ENCODE measurements at regions of chr1 and their contacts with region 1.

Region 1: DNA sequence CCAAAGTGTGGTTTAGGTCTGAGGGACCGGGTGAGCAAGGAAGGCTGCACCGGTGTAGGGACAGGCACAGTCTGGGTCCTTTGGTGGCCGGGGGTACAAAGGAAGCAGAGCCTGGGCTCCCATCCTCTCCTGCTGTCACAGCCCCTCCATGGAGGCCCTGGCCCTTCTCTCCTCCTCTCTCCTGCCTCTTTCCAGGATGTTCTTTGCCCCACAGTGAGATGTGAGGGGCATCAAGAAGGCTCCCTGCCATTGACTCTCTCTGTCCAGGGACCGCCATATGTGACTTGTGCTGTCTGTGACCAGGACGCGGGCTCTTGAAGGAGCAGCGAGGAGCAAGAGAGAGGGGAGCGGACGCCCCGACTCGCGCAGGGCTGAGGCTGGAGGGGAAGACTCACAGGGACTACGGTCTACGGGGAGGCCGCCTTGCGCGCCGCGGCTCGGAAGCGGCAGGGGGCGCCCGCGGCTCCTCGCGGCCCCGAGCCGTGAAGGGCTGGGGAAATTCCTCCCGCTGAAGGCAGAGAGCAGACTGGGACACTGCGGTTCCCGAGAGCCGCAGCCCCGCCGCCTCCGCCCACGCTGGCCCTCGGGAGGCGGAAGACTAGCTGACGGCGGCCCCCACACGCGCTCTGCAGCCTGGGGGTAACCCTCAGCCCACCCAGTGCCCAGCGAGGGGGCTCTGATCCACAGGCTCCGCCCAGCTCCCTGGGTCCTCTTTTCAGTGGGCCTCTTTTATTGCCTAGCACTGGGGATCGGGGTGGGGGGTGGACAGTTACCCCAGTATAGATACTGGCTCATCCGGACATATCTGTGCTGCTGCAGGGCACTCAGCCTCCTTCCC is 40.8 kb downstream of the MAB21L3 start:
- DNase-seq: peak; percentile 77
- H3K4me3 Mint-ChIP-seq: peak overlapping the region; percentile 65
- H3K27ac Mint-ChIP-seq: peak overlapping the region; percentile 49
- H3K4me1 Mint-ChIP-seq: peaks cover 16% of the 10 kb centered on the region
- H3K27me3 Mint-ChIP-seq: peaks cover 20% of the 10 kb centered on the region

Region 2: GRCh38 chr1:115642168-115643072 is 509.5 kb before region 1 on chr1:
- intact Hi-C with region 1: loop called (anchors 10 kb)
- DNase-seq: peak; percentile 27
- H3K4me3 Mint-ChIP-seq: peak overlapping the region; percentile 87
- H3K27ac Mint-ChIP-seq: peak overlapping the region; percentile 48
- H3K4me1 Mint-ChIP-seq: peaks cover 16% of the 10 kb centered on the region
- H3K27me3 Mint-ChIP-seq: peaks cover 23% of the 10 kb centered on the region

Region 3: DNA sequence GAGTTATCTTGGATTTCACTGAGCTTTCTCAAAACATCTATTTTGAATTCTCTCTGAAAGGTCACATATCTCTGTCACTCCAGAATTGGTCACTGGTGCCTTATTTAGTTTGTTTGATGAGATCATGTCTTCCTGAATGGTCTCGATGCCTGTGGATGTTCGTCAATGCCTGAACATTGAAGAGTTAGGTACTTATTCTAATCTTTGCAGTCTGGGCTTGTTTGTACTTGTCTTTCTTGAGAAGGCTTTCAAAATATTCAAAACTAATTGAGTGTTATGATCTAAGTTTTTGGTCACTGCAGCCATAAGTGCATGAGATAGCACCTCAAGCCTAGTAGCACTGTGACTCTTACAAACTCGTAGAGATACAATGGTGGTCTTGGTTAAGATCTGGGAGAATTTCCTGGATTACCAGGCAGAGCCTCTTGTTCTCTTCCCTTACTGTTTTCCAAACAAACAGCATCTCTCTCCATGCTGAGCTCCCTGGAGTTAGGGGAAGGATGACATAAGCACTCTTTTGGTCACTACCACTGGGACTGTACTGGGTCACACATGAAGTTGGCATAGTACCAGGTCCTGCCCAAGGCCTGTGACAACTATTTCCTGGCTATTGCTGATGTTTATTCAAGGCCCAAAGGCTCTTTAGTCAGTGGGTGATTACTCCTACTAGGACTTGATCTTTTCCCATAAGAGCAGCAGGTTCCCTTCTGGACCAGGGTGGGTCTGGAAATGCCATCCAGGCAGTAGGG is 150.0 kb before region 1 on chr1:
- intact Hi-C with region 1: no loop called
- DNase-seq: no peak
- H3K4me3 Mint-ChIP-seq: no peak overlapping the region
- H3K27ac Mint-ChIP-seq: no peak overlapping the region
- H3K4me1 Mint-ChIP-seq: peaks cover 11% of the 10 kb centered on the region
- H3K27me3 Mint-ChIP-seq: peaks cover 4% of the 10 kb centered on the region

Region 4: GRCh38 chr1:116067566-116067890 is 84.4 kb before region 1 on chr1:
- intact Hi-C with region 1: no loop called
- DNase-seq: no peak
- H3K4me3 Mint-ChIP-seq: no peak overlapping the region
- H3K27ac Mint-ChIP-seq: no peak overlapping the region
- H3K4me1 Mint-ChIP-seq: no peaks in the 10 kb centered on the region
- H3K27me3 Mint-ChIP-seq: peaks cover 6% of the 10 kb centered on the region

Region 5: GRCh38 chr1:116168277-116169097 is 16.5 kb after region 1 on chr1:
- intact Hi-C with region 1: loop called (anchors 1 kb)
- DNase-seq: peak; percentile 76
- H3K4me3 Mint-ChIP-seq: peak overlapping the region; percentile 82
- H3K27ac Mint-ChIP-seq: no peak overlapping the region
- H3K4me1 Mint-ChIP-seq: peaks cover 12% of the 10 kb centered on the region
- H3K27me3 Mint-ChIP-seq: peaks cover 8% of the 10 kb centered on the region

Region 6: GRCh38 chr1:116202934-116203723 is 51.2 kb after region 1 on chr1:
- intact Hi-C with region 1: no loop called
- DNase-seq: no peak
- H3K4me3 Mint-ChIP-seq: no peak overlapping the region
- H3K27ac Mint-ChIP-seq: no peak overlapping the region
- H3K4me1 Mint-ChIP-seq: no peaks in the 10 kb centered on the region
- H3K27me3 Mint-ChIP-seq: peaks cover 9% of the 10 kb centered on the region

Region 7: DNA sequence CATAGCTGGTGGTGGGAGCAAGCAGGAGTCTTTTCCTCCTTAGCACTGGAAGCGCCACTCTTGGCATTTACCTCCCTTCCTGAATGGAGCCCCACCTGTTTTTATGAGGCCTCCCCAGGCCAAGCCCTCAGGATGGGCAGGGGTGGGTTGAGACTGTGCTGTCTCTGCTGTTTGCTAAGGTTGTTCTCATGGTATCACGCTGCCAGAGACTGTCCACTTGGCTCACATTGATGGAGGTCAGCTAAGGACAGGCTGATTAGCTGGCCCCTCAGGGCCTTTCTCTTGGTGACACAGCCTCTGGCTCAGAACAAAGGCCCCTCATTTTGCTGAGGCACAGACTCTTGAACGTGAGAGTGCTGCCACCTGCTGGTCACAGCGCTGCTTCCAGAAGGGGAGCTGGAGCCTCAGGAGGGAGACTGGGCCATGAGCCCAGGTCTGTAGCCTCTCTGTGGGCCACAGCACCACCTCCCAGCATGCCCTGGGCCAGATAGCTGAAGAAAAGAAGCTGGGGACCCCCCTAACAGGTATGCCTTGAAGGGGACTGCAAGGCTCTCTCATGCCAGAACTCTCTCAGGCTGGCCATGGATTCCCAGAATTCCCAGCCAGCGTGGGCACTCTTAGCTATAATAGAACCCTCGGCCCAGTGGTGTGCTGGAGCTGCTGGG is 333.2 kb after region 1 on chr1:
- intact Hi-C with region 1: loop called (anchors 1 kb)
- DNase-seq: peak; percentile 72
- H3K4me3 Mint-ChIP-seq: no peak overlapping the region
- H3K27ac Mint-ChIP-seq: no peak overlapping the region
- H3K4me1 Mint-ChIP-seq: peaks cover 14% of the 10 kb centered on the region
- H3K27me3 Mint-ChIP-seq: peaks cover 4% of the 10 kb centered on the region

Region 8: DNA sequence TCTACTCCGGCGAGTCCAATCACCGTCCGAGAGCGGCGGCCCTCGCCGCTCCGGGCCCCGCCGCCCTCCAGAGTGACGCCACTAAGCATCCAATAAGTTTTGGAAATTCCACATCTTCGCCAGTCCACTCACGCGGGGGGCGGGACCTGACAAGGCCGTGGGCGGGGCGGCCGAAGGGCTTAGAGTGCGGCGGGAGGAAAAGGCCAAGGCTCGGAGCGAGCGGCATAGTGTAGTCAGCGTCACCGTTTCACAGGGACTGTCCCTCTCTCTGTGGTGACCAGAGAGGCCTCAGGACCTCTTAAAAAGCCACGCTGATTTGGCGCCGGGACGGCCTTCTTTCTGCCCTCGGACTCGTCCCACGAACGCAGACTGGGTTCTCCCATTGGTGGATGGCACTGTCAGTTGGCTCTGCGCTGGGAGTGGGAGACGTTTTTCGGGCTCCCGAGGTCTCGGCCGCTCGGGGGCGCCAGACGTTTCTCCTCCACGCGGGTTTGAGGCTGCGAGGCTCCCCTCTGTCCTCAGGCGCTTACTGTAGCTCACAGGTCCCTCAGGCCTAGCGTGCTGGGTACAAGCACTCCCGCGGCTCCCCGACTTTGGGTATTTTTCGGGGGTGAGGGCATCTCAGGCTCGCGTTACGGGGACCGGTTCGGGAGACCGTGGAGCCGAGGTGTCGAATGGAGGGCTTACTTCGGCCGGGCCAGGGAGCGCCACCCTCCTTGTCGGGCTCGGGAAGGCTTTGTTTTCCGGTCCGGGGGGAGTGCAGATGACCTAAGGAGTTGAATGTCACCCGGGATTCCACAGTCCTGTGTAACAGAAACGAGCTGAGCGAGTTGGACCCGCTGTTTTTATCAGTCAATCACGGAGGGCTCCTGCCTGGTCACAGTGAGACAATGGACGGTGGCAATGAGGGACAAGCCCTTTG is 970.1 kb after region 1 on chr1:
- intact Hi-C with region 1: loop called (anchors 10 kb)
- DNase-seq: peak; percentile 79
- H3K4me3 Mint-ChIP-seq: peak overlapping the region; percentile 84
- H3K27ac Mint-ChIP-seq: peak overlapping the region; percentile 46
- H3K4me1 Mint-ChIP-seq: peaks cover 7% of the 10 kb centered on the region
- H3K27me3 Mint-ChIP-seq: peaks cover 9% of the 10 kb centered on the region